Natural killer cell (primary cell): ENCODE measurements at regions of chr17 and their contacts with region 1.

Region 1: DNA sequence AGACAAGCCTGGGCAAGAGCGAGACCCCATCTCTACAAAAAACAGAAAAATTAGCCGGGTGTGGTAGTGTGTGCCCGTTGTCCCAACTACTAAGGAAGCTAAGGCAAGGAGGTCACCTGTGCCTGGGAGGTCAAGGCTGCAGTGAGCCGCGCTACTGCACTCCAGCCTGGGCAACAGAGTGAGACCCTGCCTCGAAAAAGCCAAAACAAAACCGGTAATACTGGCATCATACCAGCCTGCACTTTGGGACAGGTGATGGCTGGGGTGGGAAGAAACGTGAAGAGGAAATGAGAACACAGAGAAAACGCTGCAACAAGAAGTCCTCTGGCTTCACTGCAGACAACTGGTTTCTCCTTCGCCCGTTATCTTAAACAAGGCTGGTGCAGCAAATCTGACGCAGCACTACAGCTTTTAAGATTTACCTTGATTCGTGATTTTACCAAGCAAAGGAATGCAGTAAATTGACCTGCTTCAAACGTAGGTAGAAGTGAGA is 725 bp upstream of the CASC3 start:
- DNase-seq: no peak
- ATAC-seq: peak in 2 of 3 donors; percentile 2 to 6
- H3K4me3 ChIP-seq: peak overlapping the region; percentile 51
- H3K4me3 Mint-ChIP-seq: peak overlapping the region; percentile 95
- H3K27ac ChIP-seq: peak overlapping the region; percentile 94
- H3K27ac Mint-ChIP-seq: peak overlapping the region; percentile 97
- H3K4me1 ChIP-seq: peaks cover 16% of the 10 kb centered on the region
- H3K4me1 Mint-ChIP-seq: peaks cover 28 to 34% of the 10 kb centered on the region in 2 donors
- H3K27me3 ChIP-seq: no peaks in the 10 kb centered on the region
- H3K27me3 Mint-ChIP-seq: no peaks in the 10 kb centered on the region
- CTCF ChIP-seq: no peak

Region 2: DNA sequence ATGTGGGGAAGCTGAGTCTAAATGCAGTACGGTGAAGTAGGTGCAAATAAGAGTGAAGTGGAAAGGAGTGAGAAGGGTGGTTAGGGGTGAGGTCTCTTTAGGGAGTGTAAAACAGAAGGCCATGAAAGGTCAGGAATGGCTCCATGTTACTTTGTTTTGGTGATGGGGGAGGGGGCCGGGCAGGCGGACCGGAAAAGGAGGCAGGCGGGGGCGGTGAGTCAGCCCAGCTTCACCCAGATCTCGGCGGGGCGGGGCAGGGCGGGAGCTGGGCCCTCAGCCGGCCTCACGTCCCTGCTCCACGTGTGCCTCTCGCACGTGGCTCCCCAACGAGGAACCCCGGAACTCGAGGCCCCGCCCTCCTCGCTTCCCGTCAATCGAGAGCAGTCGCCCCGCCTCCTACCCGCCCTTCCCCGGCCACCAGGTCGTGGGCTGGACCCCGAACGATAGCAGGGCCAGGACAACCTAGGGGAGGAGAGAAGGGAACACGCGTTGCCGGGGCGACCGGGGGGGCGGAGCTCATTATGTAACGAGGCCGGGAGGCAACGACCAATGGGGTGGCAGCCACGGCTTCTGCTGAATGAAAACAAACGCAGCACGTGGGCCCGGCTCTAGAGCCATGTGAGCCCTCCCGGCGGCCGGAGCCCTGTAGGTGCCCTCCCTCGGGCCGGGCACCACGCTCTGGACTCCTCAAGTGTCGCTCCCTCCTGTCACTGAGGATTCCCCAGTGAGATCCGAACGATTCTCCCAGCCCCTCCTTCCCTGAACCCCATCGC is 40.6 kb before region 1 on chr17:
- intact Hi-C with region 1: loop called (anchors 1 kb)
- DNase-seq: peak; percentile 98 to 99
- ATAC-seq: peak; percentile 65 to 83 (median 70)
- H3K4me3 ChIP-seq: peak overlapping the region; percentile 55
- H3K4me3 Mint-ChIP-seq: peak overlapping the region; percentile 98
- H3K27ac ChIP-seq: peak overlapping the region; percentile 90
- H3K27ac Mint-ChIP-seq: peak overlapping the region; percentile 94 to 96
- H3K4me1 ChIP-seq: peaks cover 87% of the 10 kb centered on the region
- H3K4me1 Mint-ChIP-seq: peaks cover 67 to 75% of the 10 kb centered on the region in 2 donors
- H3K27me3 ChIP-seq: no peaks in the 10 kb centered on the region
- H3K27me3 Mint-ChIP-seq: no peaks in the 10 kb centered on the region
- CTCF ChIP-seq: no peak

Region 3: GRCh38 chr17:40219073-40219860 is 79.7 kb after region 1 on chr17 and contains the start of gene WIPF2:
- intact Hi-C with region 1: loop called (anchors 5 kb)
- DNase-seq: peak; percentile 97 to 98
- ATAC-seq: peak; percentile 92 to 98 (median 94)
- H3K4me3 ChIP-seq: peak within 1 kb of the TSS; percentile 80
- H3K4me3 Mint-ChIP-seq: peak within 1 kb of the TSS; percentile 88
- H3K27ac ChIP-seq: peak within 1 kb of the TSS; percentile 99
- H3K27ac Mint-ChIP-seq: peak within 1 kb of the TSS; percentile 99
- H3K4me1 ChIP-seq: peaks cover 28% of the 10 kb centered on the region
- H3K4me1 Mint-ChIP-seq: peaks cover 27 to 37% of the 10 kb centered on the region in 2 donors
- H3K27me3 ChIP-seq: no peaks in the 10 kb centered on the region
- H3K27me3 Mint-ChIP-seq: no peaks in the 10 kb centered on the region
- CTCF ChIP-seq: peak; percentile 56
- total RNA-seq, gene WIPF2: 43.2 to 47.4 (median 43.9) TPM